ENCODE measurements at regions of chr21 and their contacts with region 1.

Region 1: DNA sequence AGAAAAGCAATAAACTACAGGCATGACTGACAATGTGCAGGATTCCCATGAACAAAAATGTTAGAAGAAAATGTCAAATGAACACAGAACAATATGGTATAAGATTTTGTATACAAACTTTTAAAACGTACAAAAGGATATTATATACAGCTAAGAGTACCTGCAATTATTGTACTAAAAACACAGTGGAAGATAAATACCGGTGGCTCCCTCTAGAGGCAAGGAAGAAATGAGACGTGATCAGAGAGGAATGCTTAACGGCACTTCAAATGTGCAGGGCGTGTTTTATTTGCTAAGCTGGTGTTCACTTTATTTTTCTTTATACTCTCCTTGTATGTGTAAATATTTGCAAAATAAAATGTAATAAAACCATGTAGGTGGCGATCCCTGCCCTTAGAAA is 191.8 kb upstream of the SAMSN1 start:
- DNase-seq: peak; percentile 60 to 71 (median 67)
- H3K4me3 ChIP-seq: no peak overlapping the region
- H3K4me3 Mint-ChIP-seq: no peak overlapping the region
- H3K27ac ChIP-seq: no peak overlapping the region
- H3K27ac Mint-ChIP-seq: no peak overlapping the region
- H3K4me1 ChIP-seq: peaks cover 7 to 9% of the 10 kb centered on the region in 2 donors
- H3K4me1 Mint-ChIP-seq: peaks cover 7% of the 10 kb centered on the region
- H3K27me3 ChIP-seq: no peaks in the 10 kb centered on the region
- H3K27me3 Mint-ChIP-seq: no peaks in the 10 kb centered on the region
- CTCF ChIP-seq: peak; percentile 85

Region 2: GRCh38 chr21:14414932-14415508 is 322.9 kb before region 1 on chr21:
- intact Hi-C with region 1: loop called in 1 of 2 experiments (anchors 10 kb)
- DNase-seq: no peak
- H3K4me3 ChIP-seq: no peak overlapping the region
- H3K4me3 Mint-ChIP-seq: no peak overlapping the region
- H3K27ac ChIP-seq: no peak overlapping the region
- H3K27ac Mint-ChIP-seq: no peak overlapping the region
- H3K4me1 ChIP-seq: peaks cover 0 to 4% of the 10 kb centered on the region in 2 donors
- H3K4me1 Mint-ChIP-seq: peaks cover 5% of the 10 kb centered on the region
- H3K27me3 ChIP-seq: no peaks in the 10 kb centered on the region
- H3K27me3 Mint-ChIP-seq: no peaks in the 10 kb centered on the region
- CTCF ChIP-seq: no peak

Region 3: DNA sequence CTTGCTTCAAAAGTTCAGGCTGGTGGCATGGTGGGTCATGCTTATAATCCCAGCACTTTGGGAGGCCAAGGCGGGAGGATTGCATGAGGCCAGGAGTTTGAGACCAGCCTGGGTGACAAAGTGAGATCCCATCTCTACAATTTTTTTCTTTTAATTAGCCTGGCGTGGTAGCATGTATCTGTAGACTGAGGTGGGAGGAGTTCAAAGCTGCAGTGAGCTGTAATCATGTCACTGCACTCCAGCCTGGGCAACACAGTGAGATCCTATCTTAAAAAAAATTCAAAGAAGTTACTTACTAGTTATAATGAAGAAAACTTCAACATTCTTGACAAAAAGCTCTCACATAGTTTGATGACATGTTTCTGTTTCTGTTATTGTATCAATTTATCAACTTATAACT is 237.0 kb before region 1 on chr21:
- intact Hi-C with region 1: loop called in 1 of 2 experiments (anchors 10 kb)
- DNase-seq: no peak
- H3K4me3 ChIP-seq: no peak overlapping the region
- H3K4me3 Mint-ChIP-seq: no peak overlapping the region
- H3K27ac ChIP-seq: peak overlapping the region in 1 of 2 donors; percentile 71
- H3K27ac Mint-ChIP-seq: peak overlapping the region in 5 of 7 donors; percentile 43 to 85 (median 72)
- H3K4me1 ChIP-seq: peaks cover 25 to 33% of the 10 kb centered on the region in 2 donors
- H3K4me1 Mint-ChIP-seq: peaks cover 42% of the 10 kb centered on the region
- H3K27me3 ChIP-seq: no peaks in the 10 kb centered on the region
- H3K27me3 Mint-ChIP-seq: no peaks in the 10 kb centered on the region
- CTCF ChIP-seq: no peak

Region 4: GRCh38 chr21:14591882-14592281 is 146.0 kb before region 1 on chr21:
- intact Hi-C with region 1: loop called in 1 of 2 experiments (anchors 10 kb)
- DNase-seq: peak; percentile 93 to 99 (median 96)
- H3K4me3 ChIP-seq: peak overlapping the region in 1 of 3 experiments; percentile 12
- H3K4me3 Mint-ChIP-seq: peak overlapping the region in 1 of 2 donors; percentile 22
- H3K27ac ChIP-seq: peak overlapping the region; percentile 47 to 88
- H3K27ac Mint-ChIP-seq: peak overlapping the region; percentile 91 to 99 (median 97)
- H3K4me1 ChIP-seq: peaks cover 28 to 44% of the 10 kb centered on the region in 2 donors
- H3K4me1 Mint-ChIP-seq: peaks cover 38% of the 10 kb centered on the region
- H3K27me3 ChIP-seq: no peaks in the 10 kb centered on the region
- H3K27me3 Mint-ChIP-seq: no peaks in the 10 kb centered on the region
- CTCF ChIP-seq: no peak

Region 5: DNA sequence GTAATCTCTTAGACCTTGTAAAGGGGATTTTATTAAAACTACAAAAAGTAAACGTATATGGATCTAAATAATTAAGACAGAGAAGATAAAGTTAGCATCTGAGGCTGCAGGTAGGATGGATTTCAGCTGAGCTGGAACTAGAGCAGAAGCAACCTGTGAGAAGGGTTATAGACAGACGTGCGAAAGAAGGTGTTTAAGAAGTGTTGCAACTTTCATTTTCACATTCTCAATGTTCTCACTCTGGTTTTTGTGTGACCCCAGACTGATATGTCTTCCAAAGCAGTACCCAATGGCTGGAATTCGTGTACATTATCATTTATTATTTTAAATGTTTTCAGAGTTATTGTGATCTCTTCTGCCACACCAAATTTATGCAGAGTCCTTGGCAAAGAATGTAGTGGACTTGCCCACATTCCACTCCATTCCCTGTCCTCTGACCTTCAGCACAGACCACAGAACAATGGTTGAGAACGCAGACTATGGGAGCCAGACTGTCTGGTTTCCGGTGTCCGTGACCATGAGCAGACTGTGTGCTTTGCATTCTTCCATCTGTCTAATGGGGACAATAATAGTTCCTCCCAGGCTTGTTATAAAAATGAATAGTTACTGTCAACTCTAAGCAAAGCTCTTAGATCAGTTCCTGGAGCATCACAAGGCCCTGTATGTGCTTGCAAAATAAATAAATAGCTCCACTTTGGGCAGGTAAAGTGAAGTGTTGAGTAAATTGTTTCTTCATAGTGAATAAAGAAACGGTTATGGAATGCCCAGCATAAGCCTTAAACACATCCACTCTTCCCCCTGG is 51.3 kb before region 1 on chr21:
- intact Hi-C with region 1: loop called in 1 of 2 experiments (anchors 5 kb)
- DNase-seq: peak; percentile 25 to 58 (median 30)
- H3K4me3 ChIP-seq: peak overlapping the region in 1 of 3 experiments; percentile 43
- H3K4me3 Mint-ChIP-seq: peak overlapping the region in 1 of 2 donors; percentile 43
- H3K27ac ChIP-seq: peak overlapping the region; percentile 80 to 91
- H3K27ac Mint-ChIP-seq: peak overlapping the region; percentile 86 to 95 (median 92)
- H3K4me1 ChIP-seq: peaks cover 73 to 83% of the 10 kb centered on the region in 2 donors
- H3K4me1 Mint-ChIP-seq: peaks cover 77% of the 10 kb centered on the region
- H3K27me3 ChIP-seq: no peaks in the 10 kb centered on the region
- H3K27me3 Mint-ChIP-seq: no peaks in the 10 kb centered on the region
- CTCF ChIP-seq: no peak

Region 6: DNA sequence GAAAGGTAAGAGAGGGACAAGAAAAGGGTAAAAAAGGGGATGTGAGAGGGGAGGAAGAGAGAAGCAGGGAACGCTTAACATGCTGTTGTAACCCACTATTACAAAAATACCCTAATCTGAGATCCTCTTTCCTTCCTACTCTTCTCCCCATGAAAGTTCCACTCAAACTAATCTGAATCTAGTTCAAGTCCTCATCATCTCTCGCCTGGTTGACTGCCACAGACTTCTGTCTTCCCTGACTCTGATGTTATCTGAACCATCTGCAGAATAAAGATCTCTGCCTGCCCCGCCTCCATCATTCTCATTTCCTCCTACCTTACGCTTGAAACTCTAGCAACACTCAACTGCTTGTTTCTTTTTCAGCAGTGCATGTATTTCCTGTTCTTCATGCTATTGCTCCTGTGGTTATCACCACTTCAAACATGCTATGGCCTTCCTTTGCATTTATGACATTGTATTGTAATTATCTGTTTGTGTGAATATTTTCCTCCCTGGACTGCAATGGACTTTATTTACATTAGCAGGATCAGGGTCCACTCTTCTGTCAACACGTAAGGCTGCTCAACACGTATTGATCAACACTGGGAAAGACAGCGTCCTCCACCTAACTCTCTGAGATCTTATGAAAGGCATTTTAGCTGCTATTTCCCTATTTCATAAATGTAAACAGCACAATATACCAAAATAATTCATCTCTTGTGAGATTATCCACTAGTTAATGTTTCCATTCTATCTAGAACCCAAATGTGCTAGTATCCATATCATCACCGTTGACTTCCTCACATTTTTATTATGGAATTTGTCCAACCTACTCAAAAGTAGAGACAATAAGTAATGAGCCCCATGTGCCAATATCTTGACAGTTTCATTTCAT is 776.4 kb after region 1 on chr21:
- intact Hi-C with region 1: no loop called
- DNase-seq: peak in 2 of 3 donors; percentile 6 to 9
- H3K4me3 ChIP-seq: peak overlapping the region; percentile 0 to 57 (median 38)
- H3K4me3 Mint-ChIP-seq: peak overlapping the region; percentile 68 to 90
- H3K27ac ChIP-seq: peak overlapping the region in 1 of 2 donors; percentile 42
- H3K27ac Mint-ChIP-seq: peak overlapping the region; percentile 46 to 92 (median 72)
- H3K4me1 ChIP-seq: peaks cover 13 to 16% of the 10 kb centered on the region in 2 donors
- H3K4me1 Mint-ChIP-seq: peaks cover 15% of the 10 kb centered on the region
- H3K27me3 ChIP-seq: no peaks in the 10 kb centered on the region
- H3K27me3 Mint-ChIP-seq: no peaks in the 10 kb centered on the region
- CTCF ChIP-seq: no peak